Activated CD4-positive, alpha-beta T cell treated with anti-CD3 and anti-CD28 coated beads for 36 hours (primary cell): ENCODE measurements at regions of chr17 and their contacts with region 1.

Region 1: GRCh38 chr17:27601069-27601975 is 29.7 kb upstream of the LGALS9 start:
- DNase-seq: peak; percentile 90
- ATAC-seq: peak; percentile 40
- H3K4me3 Mint-ChIP-seq: no peak overlapping the region
- H3K27ac Mint-ChIP-seq: no peak overlapping the region
- H3K4me1 Mint-ChIP-seq: peaks cover 14% of the 10 kb centered on the region
- H3K27me3 Mint-ChIP-seq: no peaks in the 10 kb centered on the region

Region 2: GRCh38 chr17:27236717-27237315 is 364.5 kb before region 1 on chr17:
- CTCF ChIA-PET with region 1: interaction called, 72 read pairs
- POLR2A ChIA-PET with region 1: no interaction called
- intact Hi-C with region 1: loop called in 1 of 2 experiments (anchors 1 kb)
- DNase-seq: peak; percentile 87
- ATAC-seq: no peak
- H3K4me3 Mint-ChIP-seq: no peak overlapping the region
- H3K27ac Mint-ChIP-seq: no peak overlapping the region
- H3K4me1 Mint-ChIP-seq: peaks cover 15% of the 10 kb centered on the region
- H3K27me3 Mint-ChIP-seq: no peaks in the 10 kb centered on the region

Region 3: GRCh38 chr17:27381007-27381501 is 220.3 kb before region 1 on chr17:
- CTCF ChIA-PET with region 1: interaction called, 87 read pairs
- POLR2A ChIA-PET with region 1: no interaction called
- intact Hi-C with region 1: loop called (anchors 1 kb)
- DNase-seq: peak; percentile 94
- ATAC-seq: peak; percentile 96
- H3K4me3 Mint-ChIP-seq: no peak overlapping the region
- H3K27ac Mint-ChIP-seq: no peak overlapping the region
- H3K4me1 Mint-ChIP-seq: peaks cover 2% of the 10 kb centered on the region
- H3K27me3 Mint-ChIP-seq: peaks cover 23% of the 10 kb centered on the region

Region 4: DNA sequence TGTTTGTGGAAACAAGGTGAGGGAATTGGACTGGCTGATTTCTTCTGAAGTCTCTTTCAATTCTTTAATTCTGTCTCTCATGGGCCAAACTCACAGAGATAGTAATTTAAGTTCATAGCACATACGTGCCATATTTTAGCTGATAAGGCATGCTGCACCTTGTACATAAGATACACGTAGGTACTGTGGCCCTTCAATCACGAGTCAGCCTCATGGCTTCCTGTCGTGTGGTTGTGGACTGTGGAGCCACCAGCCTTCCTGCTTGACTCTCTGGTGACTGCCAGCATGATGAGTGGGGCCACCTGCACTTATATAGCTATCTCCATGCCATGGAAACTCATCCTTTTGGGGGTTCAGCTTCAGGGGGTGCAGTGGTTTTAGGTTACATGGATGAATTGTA is 120.0 kb before region 1 on chr17:
- CTCF ChIA-PET with region 1: interaction called, 11 read pairs
- POLR2A ChIA-PET with region 1: interaction called, 4 read pairs
- intact Hi-C with region 1: no loop called
- DNase-seq: peak; percentile 69
- ATAC-seq: peak; percentile 85
- H3K4me3 Mint-ChIP-seq: peak overlapping the region; percentile 13
- H3K27ac Mint-ChIP-seq: peak overlapping the region; percentile 75
- H3K4me1 Mint-ChIP-seq: peaks cover 60% of the 10 kb centered on the region
- H3K27me3 Mint-ChIP-seq: no peaks in the 10 kb centered on the region

Region 5: DNA sequence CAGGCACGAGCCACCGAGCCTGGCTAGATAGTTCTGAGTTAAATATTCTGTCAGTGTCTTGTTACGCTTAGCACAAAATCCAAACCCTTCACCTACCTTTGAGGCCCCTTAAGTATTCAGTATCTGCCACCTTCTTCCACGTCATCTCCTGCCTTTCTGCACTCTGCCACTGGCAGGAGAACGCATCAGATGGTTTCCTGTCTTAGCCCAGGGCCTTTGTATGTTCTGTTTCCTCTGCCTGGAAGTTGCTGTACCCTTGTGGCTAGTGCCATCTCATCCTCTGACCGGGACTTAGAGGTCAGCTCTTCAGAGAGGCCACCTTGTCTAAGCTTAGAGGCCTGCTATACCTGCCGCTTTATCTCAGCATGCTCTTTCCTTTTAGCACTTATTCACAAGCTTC is 37.8 kb before region 1 on chr17:
- CTCF ChIA-PET with region 1: interaction called, 25 read pairs
- POLR2A ChIA-PET with region 1: no interaction called
- intact Hi-C with region 1: loop called (anchors 2 kb)
- DNase-seq: no peak
- ATAC-seq: peak; percentile 27
- H3K4me3 Mint-ChIP-seq: no peak overlapping the region
- H3K27ac Mint-ChIP-seq: peak overlapping the region; percentile 35
- H3K4me1 Mint-ChIP-seq: peaks cover 41% of the 10 kb centered on the region
- H3K27me3 Mint-ChIP-seq: no peaks in the 10 kb centered on the region

Region 6: GRCh38 chr17:27654654-27655524 is 53.6 kb after region 1 on chr17:
- CTCF ChIA-PET with region 1: interaction called, 27 read pairs
- POLR2A ChIA-PET with region 1: interaction called, 3 read pairs
- intact Hi-C with region 1: loop called (anchors 1 kb)
- DNase-seq: peak; percentile 87
- ATAC-seq: peak; percentile 92
- H3K4me3 Mint-ChIP-seq: no peak overlapping the region
- H3K27ac Mint-ChIP-seq: no peak overlapping the region
- H3K4me1 Mint-ChIP-seq: peaks cover 7% of the 10 kb centered on the region
- H3K27me3 Mint-ChIP-seq: no peaks in the 10 kb centered on the region

Region 7: GRCh38 chr17:27670791-27671590 is 69.7 kb after region 1 on chr17:
- CTCF ChIA-PET with region 1: no interaction called
- POLR2A ChIA-PET with region 1: no interaction called
- intact Hi-C with region 1: no loop called
- DNase-seq: no peak
- ATAC-seq: no peak
- H3K4me3 Mint-ChIP-seq: no peak overlapping the region
- H3K27ac Mint-ChIP-seq: no peak overlapping the region
- H3K4me1 Mint-ChIP-seq: no peaks in the 10 kb centered on the region
- H3K27me3 Mint-ChIP-seq: no peaks in the 10 kb centered on the region

Region 8: DNA sequence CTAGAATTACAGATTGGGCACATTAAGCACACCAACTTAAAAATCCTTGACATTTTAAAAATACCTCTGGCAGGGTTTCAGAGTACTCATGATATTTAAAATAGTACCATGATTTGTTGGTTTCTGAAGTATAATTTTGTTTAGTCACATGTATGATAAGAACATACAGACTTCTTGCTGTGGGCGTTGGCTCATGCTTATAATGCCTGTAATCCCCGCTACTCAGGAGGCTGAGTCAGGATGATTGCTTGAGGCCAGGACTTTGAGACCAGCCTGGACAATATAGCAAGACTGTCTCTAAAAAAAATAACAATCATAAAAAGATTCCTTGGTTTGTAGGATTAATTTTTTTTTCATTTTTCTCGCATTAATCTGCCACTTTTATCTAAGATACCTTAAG is 120.5 kb after region 1 on chr17:
- CTCF ChIA-PET with region 1: no interaction called
- POLR2A ChIA-PET with region 1: no interaction called
- intact Hi-C with region 1: no loop called
- DNase-seq: no peak
- ATAC-seq: no peak
- H3K4me3 Mint-ChIP-seq: no peak overlapping the region
- H3K27ac Mint-ChIP-seq: no peak overlapping the region
- H3K4me1 Mint-ChIP-seq: no peaks in the 10 kb centered on the region
- H3K27me3 Mint-ChIP-seq: peaks cover 12% of the 10 kb centered on the region

Region 9: GRCh38 chr17:27776882-27777624 is 175.7 kb after region 1 on chr17:
- CTCF ChIA-PET with region 1: no interaction called
- POLR2A ChIA-PET with region 1: no interaction called
- intact Hi-C with region 1: no loop called
- DNase-seq: no peak
- ATAC-seq: no peak
- H3K4me3 Mint-ChIP-seq: no peak overlapping the region
- H3K27ac Mint-ChIP-seq: no peak overlapping the region
- H3K4me1 Mint-ChIP-seq: no peaks in the 10 kb centered on the region
- H3K27me3 Mint-ChIP-seq: no peaks in the 10 kb centered on the region

Region 10: GRCh38 chr17:28282596-28282995 is 681.3 kb after region 1 on chr17:
- CTCF ChIA-PET with region 1: no interaction called
- POLR2A ChIA-PET with region 1: no interaction called
- intact Hi-C with region 1: no loop called
- DNase-seq: no peak
- ATAC-seq: no peak
- H3K4me3 Mint-ChIP-seq: no peak overlapping the region
- H3K27ac Mint-ChIP-seq: no peak overlapping the region
- H3K4me1 Mint-ChIP-seq: peaks cover 10% of the 10 kb centered on the region
- H3K27me3 Mint-ChIP-seq: peaks cover 12% of the 10 kb centered on the region